B cell (primary cell): ENCODE measurements at regions of chr4 and their contacts with region 1.

Region 1: DNA sequence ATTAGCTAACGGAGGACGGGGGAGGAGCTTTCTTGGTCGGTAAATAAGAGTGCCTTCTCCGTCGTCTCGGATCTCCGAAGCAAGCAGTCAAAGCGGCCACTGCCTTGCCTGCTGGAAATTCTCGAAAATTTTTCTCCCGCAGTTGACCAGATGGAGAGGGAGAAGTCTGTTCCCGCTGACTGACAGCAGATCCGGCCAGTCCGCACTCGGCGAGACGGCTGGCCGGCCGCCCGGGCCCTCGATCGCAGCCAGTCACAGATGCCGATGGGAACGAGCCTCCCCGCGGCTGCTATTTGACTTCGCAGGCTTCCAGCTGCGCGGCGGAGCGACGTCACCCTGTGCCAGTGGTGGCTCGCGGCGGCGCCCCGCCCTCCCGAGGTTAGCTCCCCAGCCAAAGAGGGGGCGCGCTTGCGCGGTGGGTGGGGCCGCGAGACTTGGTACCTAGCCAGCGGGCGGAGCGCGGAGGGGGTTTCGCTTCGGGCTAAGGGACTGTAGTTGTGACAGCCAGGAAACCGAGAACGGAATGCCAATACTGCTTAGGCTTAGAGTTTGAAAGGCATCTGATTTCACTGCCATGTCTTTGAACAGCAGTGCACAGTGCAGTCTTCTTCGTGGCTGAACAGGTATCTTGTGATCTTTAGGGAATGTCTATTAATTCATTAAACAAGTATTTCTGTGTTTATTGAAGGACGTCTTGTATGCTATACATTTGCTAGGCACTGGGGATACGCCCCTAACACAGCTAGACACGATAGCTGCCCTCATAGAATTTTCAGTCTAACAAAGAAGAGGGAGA is at the start of gene PPM1K:
- DNase-seq: peak; percentile 99
- ATAC-seq: peak; percentile 83
- H3K4me3 ChIP-seq: peak within 1 kb of the TSS; percentile 67 to 99 (median 96)
- H3K4me3 Mint-ChIP-seq: peak within 1 kb of the TSS; percentile 95
- H3K27ac ChIP-seq: peak within 1 kb of the TSS; percentile 97 to 98
- H3K27ac Mint-ChIP-seq: peak within 1 kb of the TSS; percentile 96
- H3K4me1 ChIP-seq: peaks cover 40 to 49% of the 10 kb centered on the region in 2 donors
- H3K4me1 Mint-ChIP-seq: peaks cover 53% of the 10 kb centered on the region
- H3K27me3 ChIP-seq: no peaks in the 10 kb centered on the region
- H3K27me3 Mint-ChIP-seq: no peaks in the 10 kb centered on the region
- CTCF ChIP-seq: no peak
- total RNA-seq, gene PPM1K: 145 and 146 TPM in 2 replicates

Region 2: DNA sequence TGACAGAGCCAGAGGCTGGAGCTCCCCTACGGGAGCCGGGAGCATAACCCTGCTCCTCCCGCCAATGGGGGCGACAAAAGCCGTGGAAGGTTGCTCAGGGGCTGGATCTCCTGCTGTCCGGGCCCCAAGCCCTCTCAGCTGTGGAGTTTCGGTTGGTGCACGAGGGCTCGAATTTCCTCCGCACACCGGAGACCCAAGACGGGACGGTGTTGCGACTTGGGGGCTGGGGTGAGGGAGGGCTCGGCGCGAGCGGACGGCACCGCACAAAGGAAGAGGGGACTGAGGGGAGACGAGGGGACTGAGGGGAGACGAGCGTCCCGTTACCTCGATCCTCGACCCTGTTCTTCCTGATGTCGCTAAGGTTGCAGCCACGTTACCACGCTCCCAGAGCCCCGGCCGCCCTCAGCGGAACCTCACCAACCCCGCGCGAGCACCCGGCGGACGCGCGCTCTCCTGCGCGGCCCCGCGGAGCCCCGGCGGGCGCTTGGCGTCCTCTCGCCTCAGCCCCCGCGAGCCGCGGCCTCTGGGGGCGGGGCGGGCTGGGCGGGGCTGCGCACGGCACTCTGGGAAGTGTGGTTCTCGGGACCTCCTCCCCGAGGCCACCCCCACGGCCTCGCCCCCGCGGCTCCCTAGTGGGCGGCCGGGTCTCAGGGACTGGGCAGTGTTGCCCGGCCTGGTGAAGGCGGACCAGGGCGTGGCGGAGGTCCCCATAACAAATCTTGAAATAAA is 1064.4 kb before region 1 on chr4 and contains the start of gene KLHL8:
- CTCF ChIA-PET with region 1: no interaction called
- POLR2A ChIA-PET with region 1: no interaction called
- intact Hi-C with region 1: loop called (anchors 10 kb)
- DNase-seq: peak; percentile 92
- ATAC-seq: peak; percentile 93
- H3K4me3 ChIP-seq: peak within 1 kb of the TSS; percentile 76 to 100 (median 93)
- H3K4me3 Mint-ChIP-seq: peak within 1 kb of the TSS; percentile 98
- H3K27ac ChIP-seq: peak within 1 kb of the TSS; percentile 80 to 85
- H3K27ac Mint-ChIP-seq: peak within 1 kb of the TSS; percentile 96
- H3K4me1 ChIP-seq: peaks cover 7% of the 10 kb centered on the region in 2 donors
- H3K4me1 Mint-ChIP-seq: peaks cover 16% of the 10 kb centered on the region
- H3K27me3 ChIP-seq: no peaks in the 10 kb centered on the region
- H3K27me3 Mint-ChIP-seq: no peaks in the 10 kb centered on the region
- CTCF ChIP-seq: no peak
- total RNA-seq, gene KLHL8: 12.4 and 14.3 TPM in 2 replicates

Region 3: GRCh38 chr4:88320780-88321373 is 36.2 kb after region 1 on chr4:
- CTCF ChIA-PET with region 1: interaction called, 24 read pairs
- POLR2A ChIA-PET with region 1: interaction called, 48 read pairs
- intact Hi-C with region 1: loop called (anchors 1 kb)
- DNase-seq: peak; percentile 82
- ATAC-seq: peak; percentile 99
- H3K4me3 ChIP-seq: peak overlapping the region in 3 of 5 experiments; percentile 35 to 64 (median 42)
- H3K4me3 Mint-ChIP-seq: peak overlapping the region; percentile 90
- H3K27ac ChIP-seq: peak overlapping the region; percentile 68 to 87
- H3K27ac Mint-ChIP-seq: peak overlapping the region; percentile 99
- H3K4me1 ChIP-seq: peaks cover 30 to 34% of the 10 kb centered on the region in 2 donors
- H3K4me1 Mint-ChIP-seq: peaks cover 29% of the 10 kb centered on the region
- H3K27me3 ChIP-seq: no peaks in the 10 kb centered on the region
- H3K27me3 Mint-ChIP-seq: no peaks in the 10 kb centered on the region
- CTCF ChIP-seq: no peak

Region 4: DNA sequence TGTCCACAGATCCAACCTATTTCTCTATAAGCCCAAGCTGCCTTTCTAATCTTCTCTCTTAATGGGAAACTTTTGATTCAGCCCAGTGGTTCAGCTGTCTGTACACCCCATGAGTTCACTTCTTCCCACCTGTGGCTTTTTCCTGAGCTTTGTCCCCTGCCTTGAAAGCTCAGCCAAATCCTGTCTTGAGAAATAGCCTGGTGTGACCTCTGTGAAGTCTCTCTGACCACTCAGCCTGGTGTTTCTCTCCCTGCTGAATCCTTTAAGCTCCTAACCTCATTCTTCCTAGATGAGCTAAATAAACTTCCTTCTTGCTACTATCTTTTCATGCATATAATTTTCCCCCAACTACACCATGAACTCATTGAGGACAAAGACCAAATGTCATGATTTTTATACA is 157.1 kb after region 1 on chr4:
- CTCF ChIA-PET with region 1: no interaction called
- POLR2A ChIA-PET with region 1: interaction called, 12 read pairs
- intact Hi-C with region 1: no loop called
- DNase-seq: no peak
- ATAC-seq: no peak
- H3K4me3 ChIP-seq: no peak overlapping the region
- H3K4me3 Mint-ChIP-seq: no peak overlapping the region
- H3K27ac ChIP-seq: no peak overlapping the region
- H3K27ac Mint-ChIP-seq: no peak overlapping the region
- H3K4me1 ChIP-seq: no peaks in the 10 kb centered on the region
- H3K4me1 Mint-ChIP-seq: no peaks in the 10 kb centered on the region
- H3K27me3 ChIP-seq: no peaks in the 10 kb centered on the region
- H3K27me3 Mint-ChIP-seq: no peaks in the 10 kb centered on the region
- CTCF ChIP-seq: no peak

Region 5: GRCh38 chr4:88514557-88515511 is 230.2 kb after region 1 on chr4:
- CTCF ChIA-PET with region 1: interaction called, 14 read pairs
- POLR2A ChIA-PET with region 1: no interaction called
- intact Hi-C with region 1: loop called (anchors 2 kb)
- DNase-seq: no peak
- ATAC-seq: no peak
- H3K4me3 ChIP-seq: no peak overlapping the region
- H3K4me3 Mint-ChIP-seq: no peak overlapping the region
- H3K27ac ChIP-seq: no peak overlapping the region
- H3K27ac Mint-ChIP-seq: no peak overlapping the region
- H3K4me1 ChIP-seq: no peaks in the 10 kb centered on the region
- H3K4me1 Mint-ChIP-seq: no peaks in the 10 kb centered on the region
- H3K27me3 ChIP-seq: no peaks in the 10 kb centered on the region
- H3K27me3 Mint-ChIP-seq: peaks cover 3% of the 10 kb centered on the region
- CTCF ChIP-seq: no peak

Region 6: DNA sequence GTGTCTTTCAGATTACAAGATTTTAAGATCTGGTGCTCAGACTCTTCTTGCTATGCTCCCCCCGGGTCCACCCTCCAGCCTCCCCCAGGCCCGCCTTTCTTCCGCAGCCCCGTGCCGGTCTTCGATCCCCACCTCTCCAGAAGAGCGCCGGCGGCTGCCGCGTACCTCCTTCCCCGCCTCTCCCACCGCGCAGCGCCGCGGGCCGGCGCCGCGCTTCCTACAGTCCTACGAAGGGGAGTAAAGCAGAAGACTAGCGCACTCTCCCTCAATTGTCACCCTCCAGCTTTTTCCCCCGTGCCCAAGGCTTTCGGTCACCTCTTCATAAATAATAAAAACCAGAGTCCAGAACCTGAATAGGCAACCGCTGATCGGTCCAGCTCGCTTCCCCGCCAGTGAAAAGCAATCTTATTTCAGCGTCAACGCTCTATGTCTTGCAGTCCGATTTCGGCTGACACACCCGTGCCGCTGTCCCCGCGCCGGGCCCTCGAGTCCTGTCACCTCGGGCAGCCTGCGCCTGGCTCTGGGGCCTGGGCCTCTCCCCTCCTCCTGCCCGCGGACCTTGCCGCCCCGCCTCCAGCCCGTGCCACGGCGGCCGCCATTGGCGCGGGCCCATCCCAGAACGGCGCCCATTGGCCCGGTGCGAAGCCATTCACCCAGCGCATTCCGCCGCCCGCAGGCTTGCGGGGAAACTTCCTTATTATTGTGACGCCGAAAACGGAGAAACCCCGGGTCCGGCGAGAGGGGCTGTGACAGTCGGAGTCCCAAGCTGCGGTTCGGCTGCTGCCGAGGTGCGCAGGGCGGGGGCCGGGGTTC is 307.4 kb after region 1 on chr4 and contains the start of gene HERC3:
- CTCF ChIA-PET with region 1: no interaction called
- POLR2A ChIA-PET with region 1: no interaction called
- intact Hi-C with region 1: loop called (anchors 1 kb)
- DNase-seq: peak; percentile 93
- ATAC-seq: peak; percentile 92
- H3K4me3 ChIP-seq: peak within 1 kb of the TSS; percentile 58 to 97 (median 92)
- H3K4me3 Mint-ChIP-seq: peak within 1 kb of the TSS; percentile 99
- H3K27ac ChIP-seq: peak within 1 kb of the TSS; percentile 73 to 91
- H3K27ac Mint-ChIP-seq: peak within 1 kb of the TSS; percentile 95
- H3K4me1 ChIP-seq: peaks cover 11 to 16% of the 10 kb centered on the region in 2 donors
- H3K4me1 Mint-ChIP-seq: peaks cover 39% of the 10 kb centered on the region
- H3K27me3 ChIP-seq: no peaks in the 10 kb centered on the region
- H3K27me3 Mint-ChIP-seq: no peaks in the 10 kb centered on the region
- CTCF ChIP-seq: peak; percentile 15
- total RNA-seq, gene HERC3: 75.5 and 78.1 TPM in 2 replicates

Region 7: GRCh38 chr4:89226665-89227574 is 942.3 kb after region 1 on chr4:
- CTCF ChIA-PET with region 1: no interaction called
- POLR2A ChIA-PET with region 1: no interaction called
- intact Hi-C with region 1: no loop called
- DNase-seq: peak; percentile 73
- ATAC-seq: peak; percentile 69
- H3K4me3 ChIP-seq: no peak overlapping the region
- H3K4me3 Mint-ChIP-seq: no peak overlapping the region
- H3K27ac ChIP-seq: no peak overlapping the region
- H3K27ac Mint-ChIP-seq: no peak overlapping the region
- H3K4me1 ChIP-seq: peaks cover 0 to 4% of the 10 kb centered on the region in 2 donors
- H3K4me1 Mint-ChIP-seq: peaks cover 2% of the 10 kb centered on the region
- H3K27me3 ChIP-seq: no peaks in the 10 kb centered on the region
- H3K27me3 Mint-ChIP-seq: no peaks in the 10 kb centered on the region
- CTCF ChIP-seq: peak; percentile 83

Region 8: GRCh38 chr4:90127223-90127705 is 1842.6 kb after region 1 on chr4 and contains the start of gene CCSER1:
- CTCF ChIA-PET with region 1: no interaction called
- POLR2A ChIA-PET with region 1: no interaction called
- intact Hi-C with region 1: loop called (anchors 5 kb)
- DNase-seq: peak; percentile 94
- ATAC-seq: peak; percentile 86
- H3K4me3 ChIP-seq: peak within 1 kb of the TSS; percentile 27 to 98 (median 79)
- H3K4me3 Mint-ChIP-seq: peak within 1 kb of the TSS; percentile 96
- H3K27ac ChIP-seq: peak within 1 kb of the TSS; percentile 89 to 90
- H3K27ac Mint-ChIP-seq: peak within 1 kb of the TSS; percentile 95
- H3K4me1 ChIP-seq: peaks cover 6 to 7% of the 10 kb centered on the region in 2 donors
- H3K4me1 Mint-ChIP-seq: peaks cover 21% of the 10 kb centered on the region
- H3K27me3 ChIP-seq: no peaks in the 10 kb centered on the region
- H3K27me3 Mint-ChIP-seq: no peaks in the 10 kb centered on the region
- CTCF ChIP-seq: no peak
- total RNA-seq, gene CCSER1: 39.5 and 42.9 TPM in 2 replicates